CD8-positive, alpha-beta T cell (primary cell): ENCODE measurements at regions of chr16 and their contacts with region 1.

Region 1: GRCh38 chr16:75622761-75623605 is at the start of gene ADAT1:
- DNase-seq: peak; percentile 94 to 100 (median 98)
- ATAC-seq: peak; percentile 85
- H3K4me3 ChIP-seq: peak within 1 kb of the TSS; percentile 90 to 97
- H3K4me3 Mint-ChIP-seq: peak within 1 kb of the TSS; percentile 98
- H3K27ac ChIP-seq: peak within 1 kb of the TSS; percentile 89 to 98
- H3K27ac Mint-ChIP-seq: peak within 1 kb of the TSS; percentile 98
- H3K4me1 ChIP-seq: peaks cover 36% of the 10 kb centered on the region
- H3K4me1 Mint-ChIP-seq: peaks cover 58% of the 10 kb centered on the region
- H3K27me3 ChIP-seq: no peaks in the 10 kb centered on the region
- H3K27me3 Mint-ChIP-seq: no peaks in the 10 kb centered on the region
- CTCF ChIP-seq: no peak
- total RNA-seq, gene ADAT1: 44.4 to 47.6 TPM

Region 2: GRCh38 chr16:75148311-75149195 is 474.4 kb before region 1 on chr16 and contains the start of gene ZFP1:
- CTCF ChIA-PET with region 1: no interaction called
- POLR2A ChIA-PET with region 1: no interaction called
- intact Hi-C with region 1: loop called in 1 of 2 experiments (anchors 2 kb)
- DNase-seq: peak; percentile 86 to 98 (median 95)
- ATAC-seq: peak; percentile 89
- H3K4me3 ChIP-seq: peak within 1 kb of the TSS; percentile 85 to 100
- H3K4me3 Mint-ChIP-seq: peak within 1 kb of the TSS; percentile 87
- H3K27ac ChIP-seq: peak within 1 kb of the TSS; percentile 84
- H3K27ac Mint-ChIP-seq: peak within 1 kb of the TSS; percentile 88
- H3K4me1 ChIP-seq: peaks cover 12% of the 10 kb centered on the region
- H3K4me1 Mint-ChIP-seq: peaks cover 16% of the 10 kb centered on the region
- H3K27me3 ChIP-seq: no peaks in the 10 kb centered on the region
- H3K27me3 Mint-ChIP-seq: no peaks in the 10 kb centered on the region
- CTCF ChIP-seq: no peak
- total RNA-seq, gene ZFP1: 11.9 to 12.9 TPM

Region 3: GRCh38 chr16:75555707-75556430 is 67.1 kb before region 1 on chr16 and contains the start of gene TMEM231:
- CTCF ChIA-PET with region 1: interaction called, 14 read pairs
- POLR2A ChIA-PET with region 1: interaction called, 14 read pairs
- intact Hi-C with region 1: loop called in 1 of 2 experiments (anchors 1 kb)
- DNase-seq: peak; percentile 95 to 98 (median 97)
- ATAC-seq: peak; percentile 96
- H3K4me3 ChIP-seq: peak within 1 kb of the TSS; percentile 61 to 69
- H3K4me3 Mint-ChIP-seq: peak within 1 kb of the TSS; percentile 86
- H3K27ac ChIP-seq: peak within 1 kb of the TSS; percentile 65 to 70
- H3K27ac Mint-ChIP-seq: peak within 1 kb of the TSS; percentile 88
- H3K4me1 ChIP-seq: peaks cover 12% of the 10 kb centered on the region
- H3K4me1 Mint-ChIP-seq: peaks cover 14% of the 10 kb centered on the region
- H3K27me3 ChIP-seq: no peaks in the 10 kb centered on the region
- H3K27me3 Mint-ChIP-seq: peaks cover 9% of the 10 kb centered on the region
- CTCF ChIP-seq: no peak
- total RNA-seq, gene TMEM231: 2.1 to 2.8 TPM

Region 4: DNA sequence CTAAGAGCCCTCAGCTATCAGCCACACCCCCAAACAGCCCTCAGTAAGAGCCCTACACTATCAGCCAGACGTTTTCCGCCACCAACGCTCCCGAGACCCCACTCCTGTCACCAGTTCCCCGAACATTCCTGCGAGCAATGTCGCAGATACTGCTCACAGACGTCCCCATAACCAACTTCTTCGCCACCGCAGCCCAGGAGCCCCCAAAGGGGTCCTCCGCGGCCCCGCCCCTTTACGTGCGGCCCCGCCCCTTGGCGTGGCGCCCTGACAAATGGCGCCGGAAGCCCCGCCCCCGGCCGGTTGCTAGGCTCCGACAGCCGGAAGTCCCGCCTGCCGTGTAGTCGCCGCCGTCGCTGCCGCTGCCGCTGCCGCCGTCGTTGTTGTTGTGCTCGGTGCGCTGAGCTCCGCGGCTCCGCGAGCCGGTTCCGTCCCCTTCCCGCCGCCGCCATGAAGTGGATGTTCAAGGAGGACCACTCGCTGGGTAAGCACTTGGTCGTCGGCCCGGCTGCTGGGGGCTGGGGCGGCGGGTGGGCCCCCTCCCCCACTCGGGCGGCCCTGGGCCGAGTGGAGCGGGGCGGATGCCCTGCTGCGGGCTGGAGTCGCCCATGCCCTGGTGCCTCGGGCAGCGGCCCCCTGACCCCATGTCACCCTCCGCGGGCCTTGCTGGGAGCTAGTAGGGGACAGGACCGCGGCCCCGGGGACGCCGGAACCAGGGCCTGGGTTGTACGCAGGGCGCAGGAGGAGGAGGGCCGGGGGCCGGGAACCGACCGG is 56.8 kb before region 1 on chr16 and contains the start of gene GABARAPL2:
- CTCF ChIA-PET with region 1: interaction called, 5 read pairs
- POLR2A ChIA-PET with region 1: interaction called, 8 read pairs
- intact Hi-C with region 1: loop called (anchors 1 kb)
- DNase-seq: peak; percentile 84 to 96 (median 91)
- ATAC-seq: peak; percentile 72
- H3K4me3 ChIP-seq: peak within 1 kb of the TSS; percentile 87 to 98
- H3K4me3 Mint-ChIP-seq: peak within 1 kb of the TSS; percentile 94
- H3K27ac ChIP-seq: peak within 1 kb of the TSS; percentile 81 to 90
- H3K27ac Mint-ChIP-seq: peak within 1 kb of the TSS; percentile 97
- H3K4me1 ChIP-seq: peaks cover 12% of the 10 kb centered on the region
- H3K4me1 Mint-ChIP-seq: peaks cover 46% of the 10 kb centered on the region
- H3K27me3 ChIP-seq: peaks cover 0 to 3% of the 10 kb centered on the region in 2 experiments
- H3K27me3 Mint-ChIP-seq: peaks cover 15% of the 10 kb centered on the region
- CTCF ChIP-seq: no peak
- total RNA-seq, gene GABARAPL2: 37.4 to 39.4 TPM

Region 5: GRCh38 chr16:77190478-77191258 is 1567.7 kb after region 1 on chr16 and contains the start of gene MON1B:
- CTCF ChIA-PET with region 1: no interaction called
- POLR2A ChIA-PET with region 1: no interaction called
- intact Hi-C with region 1: loop called in 1 of 2 experiments (anchors 5 kb)
- DNase-seq: peak; percentile 88 to 99 (median 95)
- ATAC-seq: peak; percentile 93
- H3K4me3 ChIP-seq: peak within 1 kb of the TSS; percentile 70 to 81
- H3K4me3 Mint-ChIP-seq: peak within 1 kb of the TSS; percentile 100
- H3K27ac ChIP-seq: peak within 1 kb of the TSS; percentile 98
- H3K27ac Mint-ChIP-seq: peak within 1 kb of the TSS; percentile 100
- H3K4me1 ChIP-seq: peaks cover 26% of the 10 kb centered on the region
- H3K4me1 Mint-ChIP-seq: peaks cover 52% of the 10 kb centered on the region
- H3K27me3 ChIP-seq: no peaks in the 10 kb centered on the region
- H3K27me3 Mint-ChIP-seq: peaks cover 6% of the 10 kb centered on the region
- CTCF ChIP-seq: no peak
- total RNA-seq, gene MON1B: 49.1 to 50.7 TPM